IMR-90 (cell line): ENCODE measurements at regions of chr13 and their contacts with region 1.

Region 1: DNA sequence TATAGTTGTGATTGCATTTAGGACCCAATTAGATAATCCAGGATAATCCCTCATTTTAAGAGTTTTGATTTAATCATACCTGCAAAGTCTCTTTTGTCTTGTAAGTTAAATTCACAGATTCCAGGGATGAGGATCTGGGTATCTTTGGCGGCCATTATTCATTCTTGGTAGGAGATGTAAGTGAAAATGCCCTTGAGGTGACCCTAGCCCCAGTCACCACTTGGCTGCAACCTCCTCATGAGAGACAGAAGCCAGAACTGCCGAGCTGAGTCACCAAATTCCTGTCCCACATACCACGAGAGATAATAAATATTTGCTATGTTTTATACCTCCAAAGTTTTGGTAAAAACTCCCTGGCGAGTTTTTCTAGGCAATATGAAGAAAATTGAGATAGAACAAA is 389.4 kb downstream of the RFC3 start:
- DNase-seq: peak; percentile 70
- ATAC-seq: peak; percentile 90
- H3K4me3 ChIP-seq: no peak overlapping the region
- H3K27ac ChIP-seq: no peak overlapping the region
- H3K4me1 ChIP-seq: peaks cover 5% of the 10 kb centered on the region
- H3K27me3 ChIP-seq: no peaks in the 10 kb centered on the region
- CTCF ChIP-seq: no peak
- POLR2A ChIP-seq: no peak
- RAD21 ChIP-seq: no peak

Region 2: DNA sequence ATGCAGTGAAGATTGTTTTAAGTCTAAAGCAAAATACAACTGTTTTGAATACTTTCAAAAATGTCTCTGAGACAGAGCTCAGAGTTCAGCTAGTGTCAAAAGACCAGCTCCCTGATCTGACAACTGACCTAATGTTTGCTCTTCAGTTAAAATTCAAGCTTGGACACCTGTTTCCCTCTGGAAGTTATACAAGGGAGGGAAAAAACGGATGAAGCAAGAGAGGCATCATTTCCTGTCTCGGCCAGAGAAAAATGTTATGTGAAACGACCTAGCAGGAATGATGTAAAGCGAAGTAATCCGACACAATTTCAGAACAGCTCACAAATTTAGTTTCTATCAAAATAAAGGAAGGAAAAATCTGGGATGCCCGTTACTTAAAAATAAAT is 1951.6 kb before region 1 on chr13:
- CTCF ChIA-PET with region 1: no interaction called
- POLR2A ChIA-PET with region 1: interaction called, 10 read pairs
- dilution Hi-C with region 1: no loop called
- in situ Hi-C with region 1: no loop called
- intact Hi-C with region 1: no loop called
- DNase-seq: peak; percentile 76
- ATAC-seq: no peak
- H3K4me3 ChIP-seq: no peak overlapping the region
- H3K27ac ChIP-seq: no peak overlapping the region
- H3K4me1 ChIP-seq: peaks cover 3% of the 10 kb centered on the region
- H3K27me3 ChIP-seq: no peaks in the 10 kb centered on the region
- CTCF ChIP-seq: no peak
- POLR2A ChIP-seq: no peak
- RAD21 ChIP-seq: no peak

Region 3: GRCh38 chr13:34107829-34108228 is 99.5 kb before region 1 on chr13:
- CTCF ChIA-PET with region 1: no interaction called
- POLR2A ChIA-PET with region 1: no interaction called
- dilution Hi-C with region 1: no loop called
- in situ Hi-C with region 1: no loop called
- intact Hi-C with region 1: no loop called
- DNase-seq: no peak
- ATAC-seq: no peak
- H3K4me3 ChIP-seq: no peak overlapping the region
- H3K27ac ChIP-seq: no peak overlapping the region
- H3K4me1 ChIP-seq: no peaks in the 10 kb centered on the region
- H3K27me3 ChIP-seq: no peaks in the 10 kb centered on the region
- CTCF ChIP-seq: no peak
- POLR2A ChIP-seq: no peak
- RAD21 ChIP-seq: no peak